Activated CD4-positive, alpha-beta memory T cell treated with anti-CD3 and anti-CD28 coated beads for 36 hours (primary cell): ENCODE measurements at regions of chr9 and their contacts with region 1.

Region 1: GRCh38 chr9:14670718-14671117 is 22.5 kb downstream of the ZDHHC21 start:
- DNase-seq: no peak
- H3K4me3 Mint-ChIP-seq: no peak overlapping the region
- H3K27ac Mint-ChIP-seq: peak overlapping the region; percentile 69
- H3K4me1 Mint-ChIP-seq: peaks cover 13% of the 10 kb centered on the region
- H3K27me3 Mint-ChIP-seq: no peaks in the 10 kb centered on the region

Region 2: GRCh38 chr9:14511452-14511851 is 159.3 kb before region 1 on chr9:
- CTCF ChIA-PET with region 1: no interaction called
- POLR2A ChIA-PET with region 1: no interaction called
- intact Hi-C with region 1: no loop called
- DNase-seq: no peak
- H3K4me3 Mint-ChIP-seq: no peak overlapping the region
- H3K27ac Mint-ChIP-seq: no peak overlapping the region
- H3K4me1 Mint-ChIP-seq: no peaks in the 10 kb centered on the region
- H3K27me3 Mint-ChIP-seq: peaks cover 4% of the 10 kb centered on the region

Region 3: DNA sequence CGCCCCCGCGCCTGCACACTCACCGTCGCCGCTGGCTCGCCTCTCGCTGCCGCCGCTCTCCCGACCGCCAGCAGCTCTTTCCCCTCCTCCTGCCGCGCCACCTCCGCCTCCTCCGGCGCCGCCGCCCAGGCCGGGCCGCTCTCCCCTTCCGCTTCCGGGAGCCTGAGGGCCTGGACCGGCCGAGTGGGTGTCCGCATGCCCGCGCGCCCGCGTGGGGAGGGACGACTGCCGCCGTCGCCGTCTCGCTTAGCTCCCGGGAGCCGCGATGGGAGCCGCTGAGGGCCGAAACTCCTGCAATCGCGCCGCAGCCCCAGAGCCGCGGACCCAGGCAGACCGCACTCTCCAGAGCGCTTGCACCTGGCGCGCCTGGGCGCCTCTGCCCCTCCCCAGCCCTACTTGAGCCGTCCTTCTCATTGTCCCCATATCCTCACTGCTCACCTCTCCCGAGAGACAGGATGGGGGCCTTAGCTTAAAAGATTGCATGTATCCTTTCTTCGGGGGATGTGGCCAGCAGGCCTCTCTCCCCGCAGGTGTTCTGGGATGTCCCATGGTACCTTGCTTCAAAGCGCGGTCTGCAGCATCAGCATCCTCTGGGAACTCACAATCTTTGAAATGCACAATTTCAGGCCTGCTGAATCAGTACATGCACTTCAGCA is 22.6 kb after region 1 on chr9 and contains the start of gene ZDHHC21:
- CTCF ChIA-PET with region 1: no interaction called
- POLR2A ChIA-PET with region 1: no interaction called
- intact Hi-C with region 1: loop called (anchors 2 kb)
- DNase-seq: peak; percentile 70
- H3K4me3 Mint-ChIP-seq: peak within 1 kb of the TSS; percentile 90
- H3K27ac Mint-ChIP-seq: peak within 1 kb of the TSS; percentile 78
- H3K4me1 Mint-ChIP-seq: peaks cover 41% of the 10 kb centered on the region
- H3K27me3 Mint-ChIP-seq: peaks cover 4% of the 10 kb centered on the region
- total RNA-seq, gene ZDHHC21: 5.1 to 6.7 TPM